Activated B cell treated with CpG ODN at 0.5 μM for 24 hours (primary cell): ENCODE measurements at regions of chr7 and their contacts with region 1.

Region 1: DNA sequence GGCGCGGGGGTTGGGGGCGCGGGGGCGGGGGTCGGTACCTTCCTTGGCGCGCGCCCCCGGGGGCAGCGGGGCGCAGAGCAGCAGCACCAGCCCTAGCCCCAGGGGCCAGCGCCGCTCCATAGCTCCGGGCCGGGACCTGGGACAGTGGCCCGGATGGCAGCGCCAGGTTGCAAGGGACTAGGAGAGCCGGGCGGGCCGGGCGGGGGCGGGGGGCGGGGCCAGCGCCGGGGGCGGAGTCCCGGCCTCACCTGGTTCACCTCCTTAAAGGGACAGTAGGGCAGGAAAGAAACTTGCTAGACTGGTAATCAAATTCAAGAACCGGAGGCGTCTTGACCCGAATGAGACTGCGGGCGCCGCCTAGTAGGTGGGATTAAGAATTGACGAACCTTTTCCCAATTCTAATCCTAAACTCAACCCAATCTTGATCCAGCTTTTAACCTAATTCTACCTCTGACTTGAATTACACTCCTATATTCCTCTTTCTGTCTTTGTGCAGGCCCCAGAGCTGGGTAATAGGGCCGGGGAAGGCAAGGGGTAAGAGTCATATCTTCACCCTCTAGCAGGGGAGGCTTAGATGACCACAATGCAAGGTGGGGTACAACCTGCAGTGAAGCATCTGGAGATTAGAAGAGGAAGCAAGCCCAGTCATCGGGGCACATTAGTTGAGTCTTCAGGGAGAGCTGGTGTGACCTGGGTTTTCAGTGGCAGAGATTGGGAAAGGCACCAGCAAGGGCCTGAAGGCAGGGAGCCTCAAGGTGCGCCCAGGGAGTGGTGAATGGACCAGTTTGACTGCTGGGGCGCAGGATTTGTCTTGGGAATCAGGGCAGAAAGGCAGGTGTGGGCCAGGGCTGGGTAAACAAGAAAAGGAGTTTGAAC is at the start of gene EPHA1:
- DNase-seq: no peak
- ATAC-seq: peak; percentile 80
- H3K4me3 Mint-ChIP-seq: peak within 1 kb of the TSS; percentile 38
- H3K27ac Mint-ChIP-seq: no peak within 1 kb of the TSS
- H3K4me1 Mint-ChIP-seq: peaks cover 29% of the 10 kb centered on the region
- H3K27me3 Mint-ChIP-seq: peaks cover 34% of the 10 kb centered on the region
- CTCF ChIP-seq: no peak
- total RNA-seq, gene EPHA1: not detected in 2 replicates

Region 2: GRCh38 chr7:143068446-143068845 is 340.5 kb before region 1 on chr7:
- CTCF ChIA-PET with region 1: no interaction called
- POLR2A ChIA-PET with region 1: no interaction called
- intact Hi-C with region 1: no loop called
- DNase-seq: no peak
- ATAC-seq: no peak
- H3K4me3 Mint-ChIP-seq: no peak overlapping the region
- H3K27ac Mint-ChIP-seq: no peak overlapping the region
- H3K4me1 Mint-ChIP-seq: no peaks in the 10 kb centered on the region
- H3K27me3 Mint-ChIP-seq: peaks cover 2% of the 10 kb centered on the region
- CTCF ChIP-seq: no peak

Region 3: DNA sequence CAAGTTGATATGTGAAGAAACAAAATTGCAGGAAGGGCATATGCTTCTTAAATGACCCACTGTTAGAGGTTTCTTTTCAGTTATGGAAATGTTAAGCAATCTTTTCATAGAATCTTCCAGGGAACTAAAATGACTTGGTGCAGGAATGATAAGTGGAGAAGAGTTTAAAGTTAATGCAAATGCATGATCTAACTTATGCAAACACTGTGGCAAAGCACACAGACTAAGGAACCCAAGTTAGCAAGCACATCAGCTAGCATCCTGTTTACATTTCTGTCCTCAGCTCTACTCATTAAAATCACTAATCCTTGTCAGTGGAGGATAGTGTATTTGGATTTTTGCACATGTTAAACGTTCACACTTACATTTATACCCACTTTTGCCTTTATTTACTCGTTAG is 83.7 kb before region 1 on chr7:
- CTCF ChIA-PET with region 1: no interaction called
- POLR2A ChIA-PET with region 1: no interaction called
- intact Hi-C with region 1: loop called (anchors 5 kb)
- DNase-seq: no peak
- ATAC-seq: peak; percentile 62
- H3K4me3 Mint-ChIP-seq: peak overlapping the region; percentile 46
- H3K27ac Mint-ChIP-seq: peak overlapping the region; percentile 78
- H3K4me1 Mint-ChIP-seq: peaks cover 43% of the 10 kb centered on the region
- H3K27me3 Mint-ChIP-seq: no peaks in the 10 kb centered on the region
- CTCF ChIP-seq: no peak